Endothelial cell of umbilical vein (primary cell): ENCODE measurements at regions of chr22 and their contacts with region 1.

Region 1: GRCh38 chr22:23289851-23290724 is 109.8 kb downstream of the BCR start:
- DNase-seq: peak; percentile 55
- H3K4me3 ChIP-seq: no peak overlapping the region
- H3K27ac ChIP-seq: peak overlapping the region; percentile 7
- H3K4me1 ChIP-seq: peaks cover 5% of the 10 kb centered on the region
- H3K27me3 ChIP-seq: no peaks in the 10 kb centered on the region
- CTCF ChIP-seq: peak; percentile 85 to 90
- POLR2A ChIP-seq: no peak

Region 2: GRCh38 chr22:23144932-23145873 is 144.9 kb before region 1 on chr22 and contains the start of gene RAB36:
- CTCF ChIA-PET with region 1: interaction called, 10 read pairs
- POLR2A ChIA-PET with region 1: no interaction called
- dilution Hi-C with region 1: no loop called
- intact Hi-C with region 1: no loop called
- DNase-seq: peak; percentile 95
- H3K4me3 ChIP-seq: peak within 1 kb of the TSS; percentile 25 to 35 (median 26)
- H3K27ac ChIP-seq: peak within 1 kb of the TSS; percentile 26
- H3K4me1 ChIP-seq: peaks cover 9% of the 10 kb centered on the region
- H3K27me3 ChIP-seq: no peaks in the 10 kb centered on the region
- CTCF ChIP-seq: no peak
- POLR2A ChIP-seq: no peak
- total RNA-seq, gene RAB36: 2.6 and 2.7 TPM in 2 replicates

Region 3: DNA sequence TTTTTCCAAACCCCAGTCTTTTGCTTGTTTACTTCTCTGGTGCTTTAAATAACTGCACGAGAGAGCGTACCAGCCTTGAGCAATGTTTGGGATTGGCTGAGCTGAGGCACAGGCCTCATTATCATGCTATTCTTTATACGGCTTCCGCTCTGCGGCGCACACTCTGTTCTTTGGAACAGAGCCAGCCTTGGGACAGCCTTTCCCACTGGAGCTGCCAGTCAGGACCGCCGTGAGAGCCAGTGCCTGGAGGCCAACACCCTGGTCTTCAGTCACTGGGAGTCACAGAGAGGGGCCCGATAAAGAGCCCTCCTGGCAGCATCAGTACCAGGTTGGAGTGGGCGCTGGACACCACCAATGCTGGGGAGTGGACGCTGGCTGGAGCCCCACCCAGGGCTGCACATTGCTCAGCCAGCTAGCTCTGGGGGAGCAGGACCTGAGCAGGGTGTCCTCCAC is 15.9 kb after region 1 on chr22:
- CTCF ChIA-PET with region 1: interaction called, 22 read pairs
- POLR2A ChIA-PET with region 1: no interaction called
- dilution Hi-C with region 1: no loop called
- intact Hi-C with region 1: no loop called
- DNase-seq: peak; percentile 96
- H3K4me3 ChIP-seq: peak overlapping the region in 1 of 3 experiments; percentile 1
- H3K27ac ChIP-seq: peak overlapping the region; percentile 96
- H3K4me1 ChIP-seq: peaks cover 69% of the 10 kb centered on the region
- H3K27me3 ChIP-seq: no peaks in the 10 kb centered on the region
- CTCF ChIP-seq: no peak
- POLR2A ChIP-seq: no peak